Ascending aorta (tissue), 2 donors: ENCODE measurements at regions of chr1 and their contacts with region 1.

Region 1: DNA sequence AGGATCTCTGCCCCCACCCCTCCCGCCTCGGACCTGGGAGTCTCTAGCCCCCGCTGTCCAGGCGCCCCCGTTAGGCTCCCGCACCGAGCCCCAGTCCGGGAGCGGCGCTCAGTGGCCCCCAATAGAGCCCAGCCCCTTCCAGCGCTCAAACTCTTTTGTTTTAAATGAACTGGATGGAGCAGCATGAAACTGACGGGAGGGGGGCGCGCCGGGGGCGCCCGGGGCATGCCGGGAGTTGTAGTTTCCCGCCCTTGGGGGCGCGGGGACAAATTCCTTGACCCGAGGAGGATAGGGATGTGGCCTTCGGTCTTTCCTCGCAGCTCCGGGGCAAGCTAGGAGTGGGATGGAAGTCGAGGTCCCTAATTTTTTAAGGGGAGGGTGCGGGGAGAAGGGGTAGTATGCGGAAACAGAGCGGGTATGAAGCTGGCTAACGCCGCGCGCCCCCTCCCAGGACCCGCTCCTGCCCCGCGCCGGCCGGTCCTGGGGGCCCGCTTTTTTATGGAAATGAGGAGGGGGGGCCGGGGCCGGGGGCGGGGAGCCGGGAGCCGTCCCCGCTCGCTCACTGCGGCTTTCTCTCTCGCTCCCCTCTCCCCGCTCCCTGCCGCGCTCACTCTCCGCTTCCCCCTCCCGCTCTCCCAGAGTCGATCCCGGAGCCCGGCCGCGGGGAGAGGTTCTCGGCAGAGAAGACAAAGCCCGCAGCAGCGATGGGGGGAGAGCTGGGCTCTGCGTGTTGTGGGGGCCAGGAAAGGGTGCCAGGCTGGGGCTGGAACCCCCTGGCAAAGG is at the start of gene MEX3A:
- DNase-seq: peak; percentile 35 to 89
- H3K4me3 ChIP-seq: peak within 1 kb of the TSS; percentile 93 to 94
- H3K27ac ChIP-seq: peak within 1 kb of the TSS in 1 of 2 donors; percentile 26
- H3K4me1 ChIP-seq: peaks cover 4 to 14% of the 10 kb centered on the region in 2 donors
- H3K27me3 ChIP-seq: no peaks in the 10 kb centered on the region
- CTCF ChIP-seq: no peak
- total RNA-seq, gene MEX3A: 1.3 TPM

Region 2: GRCh38 chr1:156054500-156055280 is 27.8 kb before region 1 on chr1 and contains the start of gene LAMTOR2:
- intact Hi-C with region 1: loop called (anchors 2 kb)
- DNase-seq: peak; percentile 92 to 99
- H3K4me3 ChIP-seq: peak within 1 kb of the TSS; percentile 58 to 73
- H3K27ac ChIP-seq: peak within 1 kb of the TSS; percentile 85 to 96
- H3K4me1 ChIP-seq: peaks cover 0 to 8% of the 10 kb centered on the region in 2 donors
- H3K27me3 ChIP-seq: no peaks in the 10 kb centered on the region
- CTCF ChIP-seq: no peak
- total RNA-seq, gene LAMTOR2: 43.9 TPM

Region 3: DNA sequence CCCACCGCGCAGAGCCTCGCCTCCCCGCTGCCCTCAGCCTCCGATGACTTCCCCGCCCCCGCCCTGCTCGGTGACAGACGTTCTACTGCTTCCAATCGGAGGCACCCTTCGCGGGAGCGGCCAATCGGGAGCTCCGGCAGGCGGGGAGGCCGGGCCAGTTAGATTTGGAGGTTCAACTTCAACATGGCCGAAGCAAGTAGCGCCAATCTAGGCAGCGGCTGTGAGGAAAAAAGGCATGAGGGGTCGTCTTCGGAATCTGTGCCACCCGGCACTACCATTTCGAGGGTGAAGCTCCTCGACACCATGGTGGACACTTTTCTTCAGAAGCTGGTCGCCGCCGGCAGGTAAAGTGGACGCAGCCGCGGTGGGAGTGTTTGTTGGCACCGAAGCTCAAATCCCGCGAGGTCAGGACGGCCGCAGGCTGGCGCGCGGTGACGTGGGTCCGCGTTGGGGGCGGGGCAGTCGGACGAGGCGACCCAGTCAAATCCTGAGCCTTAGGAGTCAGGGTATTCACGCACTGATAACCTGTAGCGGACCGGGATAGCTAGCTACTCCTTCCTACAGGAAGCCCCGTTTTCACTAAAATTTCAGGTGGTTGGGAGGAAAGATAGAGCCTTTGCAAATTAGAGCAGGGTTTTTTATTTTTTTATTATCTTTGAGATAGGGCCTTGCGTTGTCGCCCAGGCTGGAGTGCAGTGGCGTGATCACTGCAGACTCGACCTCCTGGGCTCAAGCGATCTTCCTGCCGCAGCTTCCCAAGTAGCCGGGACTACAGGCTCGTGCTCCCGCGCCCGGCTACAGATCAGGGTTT is 130.5 kb after region 1 on chr1 and contains the start of gene PMF1:
- intact Hi-C with region 1: loop called (anchors 5 kb)
- DNase-seq: peak; percentile 93 to 99
- H3K4me3 ChIP-seq: peak within 1 kb of the TSS; percentile 74 to 82
- H3K27ac ChIP-seq: peak within 1 kb of the TSS; percentile 89 to 96
- H3K4me1 ChIP-seq: peaks cover 5 to 24% of the 10 kb centered on the region in 2 donors
- H3K27me3 ChIP-seq: no peaks in the 10 kb centered on the region
- CTCF ChIP-seq: no peak
- total RNA-seq, gene PMF1: 61.4 TPM